ENCODE measurements at regions of chr9 and their contacts with region 1.

Region 1: DNA sequence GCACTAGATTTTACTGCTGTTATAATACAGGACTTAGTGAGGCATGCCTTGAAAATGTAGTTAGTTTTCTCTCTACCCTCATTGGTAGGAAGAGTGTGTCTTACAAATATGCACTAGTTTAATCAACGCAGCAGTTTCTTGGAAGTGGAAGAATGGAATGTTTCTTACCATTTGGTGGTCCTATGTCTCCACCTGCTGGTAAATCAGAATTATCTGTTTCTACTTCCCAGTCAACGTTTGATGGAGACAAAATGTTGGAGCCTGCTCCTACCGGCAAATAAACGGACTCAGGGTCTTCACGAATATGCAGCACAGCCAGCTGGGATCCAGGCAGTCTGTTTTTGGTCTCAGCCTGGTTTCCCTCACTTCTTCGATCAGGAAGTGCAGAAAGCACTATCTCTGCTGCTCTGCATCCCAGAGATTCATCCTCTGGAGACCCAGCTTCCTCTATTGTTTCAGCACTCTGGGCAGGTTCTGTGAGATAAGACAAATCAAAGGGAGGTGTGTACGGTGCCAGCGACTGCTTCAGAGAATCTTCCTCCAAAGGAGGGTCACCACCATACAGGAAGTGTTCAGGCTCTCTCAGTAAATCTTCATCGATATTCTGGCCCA is 59.5 kb upstream of the PCA3 start:
- DNase-seq: peak in 1 of 2 donors; percentile 94
- H3K4me3 ChIP-seq: no peak overlapping the region
- H3K27ac ChIP-seq: no peak overlapping the region
- H3K4me1 ChIP-seq: peaks cover 0 to 33% (median 10%) of the 10 kb centered on the region in 4 donors
- H3K27me3 ChIP-seq: peaks cover 0 to 8% (median 0%) of the 10 kb centered on the region in 3 donors
- CTCF ChIP-seq: peak in 5 of 7 experiments; percentile 38 to 80 (median 74)
- EP300 ChIP-seq: no peak
- POLR2A ChIP-seq: no peak

Region 2: DNA sequence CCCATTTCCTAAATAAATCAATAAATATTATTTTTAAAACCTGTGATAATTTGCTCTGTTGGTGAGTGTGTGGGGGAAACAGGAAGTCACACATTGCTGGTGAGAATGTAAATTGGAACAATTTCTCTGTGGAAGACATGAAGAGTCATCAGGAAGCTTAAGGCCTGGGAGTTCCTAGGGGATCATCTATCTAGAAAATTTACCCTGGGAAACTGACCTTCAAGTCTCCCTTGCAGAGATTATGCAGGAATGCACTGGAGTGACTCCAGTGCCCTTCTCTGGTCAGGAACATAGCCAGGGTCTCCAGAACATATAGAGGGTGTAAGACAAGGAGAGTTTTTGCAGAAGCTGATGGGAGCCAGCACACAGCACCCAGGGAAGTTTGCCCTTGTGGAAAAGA is 258.7 kb before region 1 on chr9:
- intact Hi-C with region 1: loop called (anchors 5 kb)
- DNase-seq: no peak
- H3K4me3 ChIP-seq: no peak overlapping the region
- H3K27ac ChIP-seq: no peak overlapping the region
- H3K4me1 ChIP-seq: peaks cover 0 to 22% (median 11%) of the 10 kb centered on the region in 4 donors
- H3K27me3 ChIP-seq: no peaks in the 10 kb centered on the region
- CTCF ChIP-seq: no peak
- EP300 ChIP-seq: no peak
- POLR2A ChIP-seq: no peak

Measured in stomach (tissue), 19 donors.